GM10248 (cell line): ENCODE measurements at regions of chr5 and their contacts with region 1.

Region 1: GRCh38 chr5:151051066-151051930 is 29.5 kb downstream of the TNIP1 start:
- DNase-seq: peak; percentile 79
- CTCF ChIP-seq: peak; percentile 76

Region 2: DNA sequence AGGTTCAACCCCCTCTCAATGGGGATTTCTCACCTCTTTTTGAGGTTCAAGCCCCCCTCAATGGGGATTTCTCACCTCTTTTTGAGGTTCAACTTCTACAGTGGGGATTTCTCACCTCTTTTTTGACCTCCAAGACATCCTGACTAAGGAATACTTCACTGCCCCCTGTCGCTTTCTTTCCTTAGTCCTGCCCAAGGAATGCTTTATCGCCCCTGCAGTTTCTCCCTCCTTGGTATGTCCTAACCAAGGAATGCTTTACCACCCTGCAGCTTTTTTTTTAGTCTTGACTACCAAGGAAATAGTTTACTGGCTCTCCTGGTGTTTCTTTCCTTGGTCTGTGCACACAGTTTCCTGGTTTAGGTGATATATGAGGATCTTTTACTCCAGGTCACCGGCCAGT is 214.6 kb before region 1 on chr5:
- CTCF ChIA-PET with region 1: no interaction called
- POLR2A ChIA-PET with region 1: no interaction called
- DNase-seq: no peak
- CTCF ChIP-seq: no peak

Region 3: DNA sequence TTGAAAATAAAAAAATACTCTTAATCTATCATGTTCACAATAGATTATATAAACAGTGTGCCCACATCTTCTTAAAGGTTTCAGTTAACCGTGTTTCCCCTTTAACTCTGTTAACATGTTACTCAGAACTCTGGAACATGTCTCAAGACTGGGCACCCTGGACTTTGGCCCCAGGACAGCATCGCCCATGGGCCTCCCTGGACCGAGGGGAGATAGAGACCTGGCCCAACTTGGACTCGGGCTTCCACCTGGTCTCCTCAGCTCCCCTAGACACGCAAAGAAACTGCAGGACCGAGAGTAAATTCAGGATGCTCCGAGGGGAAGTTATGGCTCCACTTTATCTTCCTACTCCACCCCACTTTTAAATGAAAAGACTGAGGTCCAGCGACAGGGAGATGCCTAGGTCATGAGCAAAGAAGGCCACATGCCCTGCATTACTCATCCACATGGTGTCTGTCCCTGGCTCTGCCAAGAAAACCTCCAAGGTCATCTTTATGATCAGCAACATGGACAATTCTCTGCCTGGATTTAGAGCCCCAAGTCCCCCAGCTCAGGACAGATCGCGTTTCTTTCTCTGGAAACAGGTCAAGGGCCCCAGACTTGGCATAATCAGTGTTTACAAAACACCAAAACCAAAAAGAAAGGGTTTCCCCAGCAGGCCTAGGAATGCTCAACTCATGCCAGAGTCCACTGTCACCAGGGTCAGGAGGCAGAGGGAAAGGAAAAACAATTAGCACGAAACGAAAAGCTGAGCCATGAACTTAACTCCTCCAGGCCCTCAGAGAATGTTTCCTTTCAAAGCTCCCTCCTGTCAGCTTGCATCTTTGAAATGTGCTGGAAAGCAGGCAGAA is 13.5 kb before region 1 on chr5:
- CTCF ChIA-PET with region 1: interaction called, 108 read pairs
- POLR2A ChIA-PET with region 1: no interaction called
- DNase-seq: no peak
- CTCF ChIP-seq: no peak

Region 4: DNA sequence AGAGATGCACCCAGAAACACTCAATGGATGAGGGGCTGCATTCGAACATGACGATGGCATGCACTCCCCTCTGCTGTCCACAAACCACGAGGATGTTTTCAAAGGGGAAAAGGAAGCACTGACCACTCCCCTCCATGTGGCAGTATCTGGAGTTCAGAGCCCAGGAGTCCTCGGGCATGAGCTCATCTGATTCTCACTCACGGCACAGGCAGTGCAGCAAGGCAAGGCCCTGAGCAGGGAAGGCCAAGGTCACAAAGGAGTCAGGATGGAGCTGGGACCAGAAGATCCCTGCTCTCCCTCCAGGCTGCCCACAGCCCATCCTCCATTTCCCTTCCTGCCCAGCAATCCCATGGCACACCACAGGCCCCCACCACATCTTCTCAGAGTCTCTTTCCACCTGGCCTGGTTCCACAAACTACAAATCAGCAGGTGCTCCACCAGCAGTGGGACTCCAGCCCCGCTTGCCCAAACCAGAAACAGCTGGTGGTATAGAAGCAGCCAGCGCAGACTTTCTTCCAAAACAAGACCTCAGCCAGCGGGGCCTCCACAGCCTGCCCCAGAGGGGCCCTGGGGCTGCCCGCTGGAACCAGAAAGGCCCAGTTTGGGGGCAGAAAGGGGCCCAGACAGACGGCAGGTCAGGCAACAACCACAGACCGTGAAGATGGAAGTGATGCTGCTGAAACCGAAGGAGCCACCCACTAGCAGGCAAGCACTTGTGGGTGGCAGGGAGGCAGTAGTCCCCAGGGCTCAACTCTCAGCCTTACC is 17.3 kb after region 1 on chr5:
- CTCF ChIA-PET with region 1: interaction called, 90 read pairs
- POLR2A ChIA-PET with region 1: no interaction called
- DNase-seq: peak; percentile 45
- CTCF ChIP-seq: no peak

Region 5: GRCh38 chr5:151080623-151081430 is 29.5 kb after region 1 on chr5 and contains the start of gene TNIP1:
- CTCF ChIA-PET with region 1: interaction called, 15 read pairs
- POLR2A ChIA-PET with region 1: no interaction called
- DNase-seq: peak; percentile 97
- CTCF ChIP-seq: no peak

Region 6: GRCh38 chr5:151141535-151141934 is 90.2 kb after region 1 on chr5:
- CTCF ChIA-PET with region 1: interaction called, 12 read pairs
- POLR2A ChIA-PET with region 1: no interaction called
- DNase-seq: peak; percentile 84
- CTCF ChIP-seq: no peak

Region 7: DNA sequence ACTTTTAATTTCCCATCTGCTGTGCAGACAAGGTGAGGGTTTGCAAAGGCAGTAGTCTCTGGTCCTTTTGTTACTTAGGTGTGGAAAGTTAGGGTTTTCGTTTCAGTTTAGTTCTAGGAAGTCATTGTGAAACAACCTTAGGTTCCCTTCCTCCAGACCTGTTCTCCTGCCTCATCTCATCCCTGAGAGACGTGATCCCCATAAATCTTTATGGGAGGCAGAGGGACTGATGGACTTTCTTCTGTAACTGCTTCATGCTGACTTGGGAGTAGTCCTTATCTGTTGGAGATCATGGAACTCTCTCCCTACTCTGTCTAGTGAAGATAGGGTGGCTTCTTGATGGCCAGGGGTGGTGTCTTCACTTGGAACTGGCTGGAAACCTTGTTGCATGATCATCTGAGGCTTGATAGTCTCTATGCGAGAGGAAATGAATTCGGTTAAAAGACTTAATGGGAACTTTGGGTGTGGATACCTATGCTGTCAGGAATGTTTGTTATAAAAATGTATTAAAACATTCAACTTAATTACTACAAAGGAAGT is 194.5 kb after region 1 on chr5:
- CTCF ChIA-PET with region 1: no interaction called
- POLR2A ChIA-PET with region 1: no interaction called
- DNase-seq: no peak
- CTCF ChIP-seq: no peak